ENCODE measurements at regions of chr3 and their contacts with region 1.

Region 1: GRCh38 chr3:28682121-28682520 is 333.5 kb upstream of the AZI2 start:
- DNase-seq: no peak
- ATAC-seq: no peak
- H3K4me3 ChIP-seq: no peak overlapping the region
- H3K27ac ChIP-seq: no peak overlapping the region
- H3K4me1 ChIP-seq: no peaks in the 10 kb centered on the region
- H3K27me3 ChIP-seq: no peaks in the 10 kb centered on the region
- CTCF ChIP-seq: no peak

Region 2: DNA sequence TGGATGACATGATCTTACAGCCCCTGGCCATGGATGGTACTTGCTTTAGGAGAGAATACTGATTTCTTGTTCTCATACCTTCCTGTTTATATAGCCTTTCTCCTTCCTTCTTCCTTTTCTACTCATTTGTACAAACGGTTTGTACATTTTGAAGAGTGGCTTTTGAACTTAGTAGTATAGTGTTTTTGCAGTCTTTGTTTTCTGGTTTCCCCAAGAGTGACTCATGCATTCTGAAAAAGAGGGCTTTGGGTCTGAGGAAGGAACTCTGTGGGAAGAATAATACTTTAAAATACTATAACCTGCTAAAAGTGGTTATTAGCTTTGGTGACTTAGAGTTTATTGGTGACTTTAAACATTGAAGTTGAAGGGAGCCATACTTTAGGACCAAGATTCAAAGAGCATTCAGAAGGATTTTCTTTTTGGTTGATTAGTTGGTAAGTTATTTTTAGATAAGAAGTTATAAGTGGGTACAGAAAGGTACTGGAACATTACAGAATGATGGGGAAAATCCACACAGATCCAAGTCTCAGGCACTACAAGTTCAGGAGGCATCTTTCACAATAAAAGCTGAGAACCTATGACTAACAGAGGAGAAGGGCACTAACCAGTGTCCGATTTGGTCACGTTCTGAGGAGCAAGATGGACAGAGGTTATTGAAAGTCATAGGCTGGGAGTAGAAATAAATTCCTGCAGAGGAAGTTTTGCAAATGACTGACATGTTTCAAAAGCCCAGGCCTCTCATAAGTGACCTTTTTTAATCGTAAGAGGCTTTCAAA is 36.1 kb after region 1 on chr3:
- intact Hi-C with region 1: loop called in 1 of 2 experiments (anchors 5 kb)
- DNase-seq: no peak
- ATAC-seq: peak in 1 of 4 donors; percentile 70
- H3K4me3 ChIP-seq: no peak overlapping the region
- H3K27ac ChIP-seq: no peak overlapping the region
- H3K4me1 ChIP-seq: no peaks in the 10 kb centered on the region
- H3K27me3 ChIP-seq: no peaks in the 10 kb centered on the region
- CTCF ChIP-seq: no peak

Measured in psoas muscle (tissue), 8 donors.